Astrocyte of the cerebellum (primary cell): ENCODE measurements at regions of chr3 and their contacts with region 1.

Region 1: GRCh38 chr3:118436697-118437262 is 597.9 kb downstream of the IGSF11 start:
- DNase-seq: no peak
- H3K4me3 ChIP-seq: no peak overlapping the region
- CTCF ChIP-seq: no peak

Region 2: DNA sequence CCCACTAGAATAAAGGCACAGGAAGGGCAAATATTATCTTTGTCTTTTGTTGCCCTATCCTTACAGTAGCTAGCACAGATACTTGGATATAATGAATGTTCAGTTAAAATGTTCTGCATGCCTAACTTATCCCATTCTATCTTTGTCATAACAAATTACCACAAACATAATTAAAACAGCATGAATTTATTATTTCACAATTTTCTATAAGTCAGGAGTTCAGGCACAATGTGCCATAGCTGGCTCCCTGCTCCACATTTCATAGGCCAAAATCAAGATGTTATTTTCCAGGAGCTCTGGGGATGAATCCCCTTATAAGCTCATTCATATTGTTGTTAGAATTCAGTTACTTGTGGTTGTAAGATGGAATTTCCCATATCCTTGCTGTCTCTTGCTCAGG is 377.7 kb before region 1 on chr3:
- in situ Hi-C with region 1: no loop called
- DNase-seq: no peak
- H3K4me3 ChIP-seq: no peak overlapping the region
- CTCF ChIP-seq: no peak

Region 3: GRCh38 chr3:118400886-118401285 is 35.9 kb before region 1 on chr3:
- in situ Hi-C with region 1: loop called (anchors 5 kb)
- DNase-seq: no peak
- H3K4me3 ChIP-seq: no peak overlapping the region
- CTCF ChIP-seq: no peak

Region 4: GRCh38 chr3:118495206-118495605 is 58.4 kb after region 1 on chr3:
- in situ Hi-C with region 1: no loop called
- DNase-seq: no peak
- H3K4me3 ChIP-seq: no peak overlapping the region
- CTCF ChIP-seq: no peak

Region 5: GRCh38 chr3:118577055-118577777 is 140.4 kb after region 1 on chr3:
- in situ Hi-C with region 1: no loop called
- DNase-seq: no peak
- H3K4me3 ChIP-seq: no peak overlapping the region
- CTCF ChIP-seq: no peak

Region 6: DNA sequence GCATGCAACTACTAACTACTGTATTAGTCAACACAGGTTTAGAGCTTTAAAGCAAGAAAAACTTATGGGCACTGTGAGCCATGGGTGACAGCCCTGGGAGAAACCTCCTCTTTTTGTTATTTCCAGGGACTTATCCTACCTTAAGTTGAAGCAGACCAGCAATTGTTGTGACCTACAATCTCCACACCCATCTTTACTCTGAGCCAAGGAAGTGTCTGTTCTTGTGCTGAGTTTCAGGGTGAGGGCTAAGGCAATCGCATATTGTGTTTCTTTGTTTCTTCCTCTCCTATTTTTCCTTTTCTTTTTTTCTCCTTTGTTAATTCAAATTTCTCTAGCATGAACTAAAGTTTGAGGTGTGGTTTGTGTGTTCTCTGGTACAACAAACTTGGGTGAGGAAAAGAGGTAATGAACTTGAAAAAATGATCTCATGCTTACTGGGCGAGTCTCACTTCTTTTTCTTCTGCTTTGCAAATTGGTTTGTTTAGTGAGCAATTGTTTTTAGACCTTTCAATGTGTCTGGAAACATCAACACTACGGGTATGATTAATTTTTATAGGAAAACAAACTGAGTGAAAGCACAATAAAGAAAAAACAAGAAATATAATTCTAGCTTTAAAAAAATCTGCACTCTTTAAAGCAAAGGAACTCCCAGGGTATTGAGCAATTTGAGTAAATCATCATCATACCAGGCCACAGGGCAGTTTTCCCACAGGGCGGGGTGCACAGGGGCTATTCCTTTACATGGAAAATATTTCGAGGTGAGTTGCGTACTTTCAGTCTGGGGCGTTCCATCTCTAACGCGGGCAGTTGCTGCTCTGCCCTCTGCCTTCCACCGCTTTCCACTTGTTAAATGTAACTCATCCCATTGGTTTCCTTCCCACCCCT is 739.3 kb after region 1 on chr3:
- in situ Hi-C with region 1: no loop called
- DNase-seq: no peak
- H3K4me3 ChIP-seq: no peak overlapping the region
- CTCF ChIP-seq: no peak